OCI-LY7 (cell line): ENCODE measurements at regions of chr1 and their contacts with region 1.

Region 1: GRCh38 chr1:23098463-23099170 is 70.0 kb downstream of the LUZP1 start:
- DNase-seq: peak; percentile 80
- H3K4me3 ChIP-seq: no peak overlapping the region
- H3K27ac ChIP-seq: no peak overlapping the region
- H3K4me1 ChIP-seq: peaks cover 27% of the 10 kb centered on the region
- CTCF ChIP-seq: peak; percentile 91

Region 2: DNA sequence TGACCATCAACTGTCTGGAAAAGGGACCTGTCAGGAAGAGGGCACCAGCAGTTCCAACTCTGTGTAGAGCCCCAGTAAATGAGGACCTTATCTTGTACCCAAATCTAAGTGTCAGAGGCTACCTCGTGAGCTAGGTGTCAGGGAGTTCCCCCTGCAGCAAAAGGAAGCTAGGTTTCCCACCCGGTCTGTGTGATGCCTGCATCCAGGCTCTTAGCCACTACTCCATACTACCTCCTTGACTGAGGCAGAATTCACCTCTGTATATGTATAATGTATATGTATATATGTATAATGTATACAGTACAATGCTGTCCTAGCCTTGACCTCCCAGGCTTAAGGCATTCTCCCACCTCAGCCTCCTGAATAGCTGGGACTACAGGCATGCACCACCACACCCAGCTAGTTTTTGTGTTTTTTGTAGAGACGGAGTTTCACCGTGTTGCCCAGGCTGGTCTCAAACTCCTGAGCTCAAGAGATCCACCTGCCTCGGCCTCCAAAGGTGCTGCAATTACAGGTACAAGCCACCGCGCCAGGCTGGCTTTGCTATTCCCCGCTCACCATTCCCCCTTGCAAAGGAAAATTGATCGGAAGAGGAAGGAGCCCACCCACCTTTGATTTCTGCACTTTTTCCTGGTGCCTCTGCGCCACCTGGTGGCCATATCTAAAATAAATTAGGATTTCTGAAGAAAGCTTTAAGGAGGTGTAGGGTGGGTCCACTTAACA is 85.8 kb after region 1 on chr1:
- CTCF ChIA-PET with region 1: interaction called, 30 read pairs
- POLR2A ChIA-PET with region 1: interaction called, 4 read pairs
- intact Hi-C with region 1: loop called (anchors 1 kb)
- DNase-seq: peak; percentile 69
- H3K4me3 ChIP-seq: no peak overlapping the region
- H3K27ac ChIP-seq: no peak overlapping the region
- H3K4me1 ChIP-seq: peaks cover 12% of the 10 kb centered on the region
- CTCF ChIP-seq: peak; percentile 89

Region 3: GRCh38 chr1:23273450-23274133 is 175.0 kb after region 1 on chr1:
- CTCF ChIA-PET with region 1: no interaction called
- POLR2A ChIA-PET with region 1: no interaction called
- intact Hi-C with region 1: loop called (anchors 10 kb)
- DNase-seq: no peak
- H3K4me3 ChIP-seq: no peak overlapping the region
- H3K27ac ChIP-seq: no peak overlapping the region
- H3K4me1 ChIP-seq: no peaks in the 10 kb centered on the region
- CTCF ChIP-seq: no peak